ENCODE measurements at regions of chr13 and their contacts with region 1.

Region 1: DNA sequence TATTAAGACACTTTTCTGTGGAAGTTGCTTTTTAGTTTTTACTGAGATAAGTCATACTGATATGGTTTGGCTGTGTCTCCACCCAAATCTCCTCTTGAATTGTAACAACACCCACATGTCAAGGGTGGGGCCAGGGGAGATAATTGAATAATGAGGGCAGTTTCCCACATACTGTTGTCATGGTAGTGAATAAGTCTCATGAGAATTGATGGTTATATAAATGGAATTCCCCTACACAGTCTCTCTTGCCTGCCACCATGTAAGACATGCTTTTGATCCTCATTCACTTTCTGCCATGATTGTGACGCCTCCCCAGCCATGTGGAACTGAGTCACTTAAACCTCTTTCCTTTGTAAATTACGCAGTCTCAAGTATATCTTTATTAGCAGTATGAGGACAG is 1340.4 kb downstream of the SLITRK5 start:
- DNase-seq: no peak
- ATAC-seq: no peak
- H3K4me3 ChIP-seq: no peak overlapping the region
- H3K27ac ChIP-seq: no peak overlapping the region
- H3K4me1 ChIP-seq: no peaks in the 10 kb centered on the region
- H3K27me3 ChIP-seq: no peaks in the 10 kb centered on the region
- CTCF ChIP-seq: no peak

Region 2: DNA sequence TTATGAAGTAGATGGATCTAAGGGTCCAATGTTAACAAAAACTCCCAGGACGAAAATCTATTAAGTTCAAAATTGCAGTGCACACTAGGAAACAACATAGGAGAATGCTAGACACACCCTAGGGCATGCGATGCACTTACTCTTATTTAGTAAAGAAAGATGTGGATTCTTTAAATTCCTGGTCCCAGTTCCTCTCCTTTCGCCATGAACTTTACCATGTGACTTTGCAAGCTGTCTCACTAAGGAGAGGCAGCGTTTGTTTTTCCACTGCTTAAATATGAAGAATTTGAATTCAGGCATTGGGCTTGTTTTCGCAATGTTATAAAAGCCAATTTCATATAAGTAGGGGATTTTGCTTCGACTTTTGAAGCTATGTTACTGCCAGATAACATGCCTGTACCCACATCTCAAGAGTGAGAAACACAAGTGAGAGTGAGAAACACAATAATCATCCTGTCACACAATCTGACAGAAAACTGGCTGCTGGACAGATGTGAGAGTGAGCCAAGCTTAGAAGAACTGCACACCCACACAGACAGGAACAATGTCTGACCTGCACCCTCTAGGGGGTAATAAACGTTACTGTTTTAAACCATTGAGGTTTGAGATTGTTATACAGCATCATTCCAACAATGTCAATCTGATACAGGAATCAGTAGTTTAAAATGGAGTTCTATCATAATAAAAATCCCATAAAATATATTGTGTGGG is 32.0 kb before region 1 on chr13:
- intact Hi-C with region 1: loop called in 1 of 10 experiments (anchors 1 kb)
- DNase-seq: peak in 1 of 2 donors; percentile 21
- ATAC-seq: peak; percentile 82 to 99 (median 92)
- H3K4me3 ChIP-seq: no peak overlapping the region
- H3K27ac ChIP-seq: no peak overlapping the region
- H3K4me1 ChIP-seq: peaks cover 0 to 7% (median 0%) of the 10 kb centered on the region in 9 donors
- H3K27me3 ChIP-seq: no peaks in the 10 kb centered on the region
- CTCF ChIP-seq: peak in 7 of 9 donors; percentile 21 to 48 (median 41)